ENCODE measurements at regions of chr3 and their contacts with region 1.

Region 1: GRCh38 chr3:163056874-163057497 is 1560.4 kb downstream of the OTOL1 start:
- DNase-seq: peak; percentile 42
- ATAC-seq: peak; percentile 63; the same call in 1 of the 2 replicates
- H3K4me3 ChIP-seq: no peak overlapping the region
- H3K27ac ChIP-seq: no peak overlapping the region
- H3K4me1 ChIP-seq: no peaks in the 10 kb centered on the region
- H3K27me3 ChIP-seq: no peaks in the 10 kb centered on the region
- CTCF ChIP-seq: peak; percentile 49 to 76 (median 59); a peak in 5 of 6 replicates
- POLR2A ChIP-seq: no peak
- RAD21 ChIP-seq: peak; percentile 66

Region 2: GRCh38 chr3:161177996-161178395 is 1879.0 kb before region 1 on chr3:
- CTCF ChIA-PET with region 1: no interaction called
- POLR2A ChIA-PET with region 1: no interaction called
- RAD21 ChIA-PET with region 1: no interaction called
- intact Hi-C with region 1: no loop called
- DNase-seq: no peak
- ATAC-seq: no peak
- H3K4me3 ChIP-seq: no peak overlapping the region
- H3K27ac ChIP-seq: no peak overlapping the region
- H3K4me1 ChIP-seq: no peaks in the 10 kb centered on the region
- H3K27me3 ChIP-seq: no peaks in the 10 kb centered on the region
- CTCF ChIP-seq: no peak
- POLR2A ChIP-seq: no peak
- RAD21 ChIP-seq: no peak

Region 3: GRCh38 chr3:162865466-162865865 is 191.5 kb before region 1 on chr3:
- CTCF ChIA-PET with region 1: no interaction called
- POLR2A ChIA-PET with region 1: no interaction called
- RAD21 ChIA-PET with region 1: no interaction called
- intact Hi-C with region 1: no loop called
- DNase-seq: no peak
- ATAC-seq: peak; percentile 55; the same call in 1 of the 2 replicates
- H3K4me3 ChIP-seq: no peak overlapping the region
- H3K27ac ChIP-seq: no peak overlapping the region
- H3K4me1 ChIP-seq: no peaks in the 10 kb centered on the region
- H3K27me3 ChIP-seq: no peaks in the 10 kb centered on the region
- CTCF ChIP-seq: peak in 1 of 3 experiments; percentile 17; a peak in 1 of 6 replicates
- POLR2A ChIP-seq: no peak
- RAD21 ChIP-seq: no peak

Region 4: GRCh38 chr3:162884373-162884772 is 172.6 kb before region 1 on chr3:
- CTCF ChIA-PET with region 1: no interaction called
- POLR2A ChIA-PET with region 1: no interaction called
- RAD21 ChIA-PET with region 1: no interaction called
- intact Hi-C with region 1: no loop called
- DNase-seq: no peak
- ATAC-seq: no peak
- H3K4me3 ChIP-seq: no peak overlapping the region
- H3K27ac ChIP-seq: no peak overlapping the region
- H3K4me1 ChIP-seq: no peaks in the 10 kb centered on the region
- H3K27me3 ChIP-seq: no peaks in the 10 kb centered on the region
- CTCF ChIP-seq: no peak
- POLR2A ChIP-seq: no peak
- RAD21 ChIP-seq: no peak

Region 5: DNA sequence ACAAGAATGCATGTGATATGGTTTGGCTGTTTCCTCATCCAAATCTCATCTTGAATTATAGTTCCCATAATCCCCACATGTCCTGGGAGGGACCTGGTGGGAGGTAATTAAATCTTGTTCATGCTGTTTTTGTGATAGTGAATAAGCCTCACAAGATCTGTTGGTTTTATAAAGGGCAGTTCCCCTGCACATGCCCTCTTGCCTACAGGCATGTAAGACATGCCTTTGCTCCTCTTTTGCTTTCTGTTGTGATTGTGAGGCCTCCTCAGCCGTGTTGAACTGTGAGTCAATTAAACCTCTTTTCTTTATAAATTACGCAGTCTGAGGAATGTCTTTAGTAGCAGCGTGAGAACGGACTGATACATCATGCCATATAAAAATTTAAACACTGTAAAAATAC is 23.3 kb before region 1 on chr3:
- CTCF ChIA-PET with region 1: no interaction called
- POLR2A ChIA-PET with region 1: no interaction called
- RAD21 ChIA-PET with region 1: no interaction called
- intact Hi-C with region 1: no loop called
- DNase-seq: no peak
- ATAC-seq: no peak
- H3K4me3 ChIP-seq: no peak overlapping the region
- H3K27ac ChIP-seq: no peak overlapping the region
- H3K4me1 ChIP-seq: no peaks in the 10 kb centered on the region
- H3K27me3 ChIP-seq: no peaks in the 10 kb centered on the region
- CTCF ChIP-seq: no peak
- POLR2A ChIP-seq: no peak
- RAD21 ChIP-seq: no peak

Region 6: DNA sequence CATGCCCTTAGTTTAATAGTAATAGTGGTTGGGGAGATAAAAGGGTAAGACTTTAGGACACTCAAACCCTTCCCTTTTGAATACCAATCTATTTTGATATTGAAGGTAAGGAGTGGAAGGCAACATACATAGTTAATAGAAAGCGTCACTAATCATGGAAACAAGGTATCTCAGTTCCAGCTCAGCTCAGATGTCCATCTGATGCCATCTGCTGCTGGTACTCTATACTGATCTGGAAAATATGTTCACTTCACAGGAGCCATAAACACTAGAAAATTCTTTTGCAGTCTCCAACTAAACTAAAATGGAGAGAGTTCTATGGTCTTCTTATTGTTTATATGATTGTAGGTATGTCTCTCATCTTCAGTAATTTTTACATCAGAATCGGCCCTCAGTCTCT is 216.7 kb after region 1 on chr3:
- CTCF ChIA-PET with region 1: no interaction called
- POLR2A ChIA-PET with region 1: no interaction called
- RAD21 ChIA-PET with region 1: no interaction called
- intact Hi-C with region 1: loop called (anchors 5 kb)
- DNase-seq: no peak
- ATAC-seq: peak; percentile 36; the same call in 1 of the 2 replicates
- H3K4me3 ChIP-seq: no peak overlapping the region
- H3K27ac ChIP-seq: no peak overlapping the region
- H3K4me1 ChIP-seq: no peaks in the 10 kb centered on the region
- H3K27me3 ChIP-seq: no peaks in the 10 kb centered on the region
- CTCF ChIP-seq: no peak
- POLR2A ChIP-seq: no peak
- RAD21 ChIP-seq: peak; percentile 20; the same call in 1 of the 2 replicates

Region 7: GRCh38 chr3:163490119-163490518 is 433.1 kb after region 1 on chr3:
- CTCF ChIA-PET with region 1: interaction called, 5 read pairs
- POLR2A ChIA-PET with region 1: no interaction called
- RAD21 ChIA-PET with region 1: no interaction called
- intact Hi-C with region 1: loop called (anchors 1 kb)
- DNase-seq: peak; percentile 48
- ATAC-seq: peak; percentile 95
- H3K4me3 ChIP-seq: no peak overlapping the region
- H3K27ac ChIP-seq: no peak overlapping the region
- H3K4me1 ChIP-seq: no peaks in the 10 kb centered on the region
- H3K27me3 ChIP-seq: no peaks in the 10 kb centered on the region
- CTCF ChIP-seq: peak; percentile 74 to 81 (median 77)
- POLR2A ChIP-seq: no peak
- RAD21 ChIP-seq: peak; percentile 80

Region 8: DNA sequence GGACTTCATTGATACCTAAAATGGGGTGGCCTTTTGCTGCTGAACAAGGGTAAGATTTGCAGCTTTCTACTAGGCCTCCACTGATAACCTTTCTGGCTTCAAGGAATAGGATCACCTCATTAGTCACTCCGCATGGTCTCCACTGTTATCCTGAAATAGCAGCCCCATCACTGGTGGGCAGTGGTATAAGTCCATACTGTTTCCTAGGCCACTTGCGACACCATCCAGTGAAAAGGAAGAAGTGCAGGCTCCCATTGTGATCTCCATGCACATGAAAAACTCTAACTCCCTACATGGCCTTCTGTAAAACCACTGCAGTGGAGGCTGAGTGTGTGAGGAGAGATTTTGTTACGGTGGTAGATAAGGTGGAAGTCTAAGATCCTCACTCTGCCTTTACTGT is 565.4 kb after region 1 on chr3:
- CTCF ChIA-PET with region 1: no interaction called
- POLR2A ChIA-PET with region 1: no interaction called
- RAD21 ChIA-PET with region 1: no interaction called
- intact Hi-C with region 1: loop called (anchors 10 kb)
- DNase-seq: peak; percentile 0
- ATAC-seq: peak; percentile 55; the same call in 1 of the 2 replicates
- H3K4me3 ChIP-seq: no peak overlapping the region
- H3K27ac ChIP-seq: no peak overlapping the region
- H3K4me1 ChIP-seq: no peaks in the 10 kb centered on the region
- H3K27me3 ChIP-seq: no peaks in the 10 kb centered on the region
- CTCF ChIP-seq: peak; percentile 6 to 22 (median 22); a peak in 3 of 6 replicates
- POLR2A ChIP-seq: no peak
- RAD21 ChIP-seq: peak; percentile 34; the same call in 1 of the 2 replicates

Region 9: DNA sequence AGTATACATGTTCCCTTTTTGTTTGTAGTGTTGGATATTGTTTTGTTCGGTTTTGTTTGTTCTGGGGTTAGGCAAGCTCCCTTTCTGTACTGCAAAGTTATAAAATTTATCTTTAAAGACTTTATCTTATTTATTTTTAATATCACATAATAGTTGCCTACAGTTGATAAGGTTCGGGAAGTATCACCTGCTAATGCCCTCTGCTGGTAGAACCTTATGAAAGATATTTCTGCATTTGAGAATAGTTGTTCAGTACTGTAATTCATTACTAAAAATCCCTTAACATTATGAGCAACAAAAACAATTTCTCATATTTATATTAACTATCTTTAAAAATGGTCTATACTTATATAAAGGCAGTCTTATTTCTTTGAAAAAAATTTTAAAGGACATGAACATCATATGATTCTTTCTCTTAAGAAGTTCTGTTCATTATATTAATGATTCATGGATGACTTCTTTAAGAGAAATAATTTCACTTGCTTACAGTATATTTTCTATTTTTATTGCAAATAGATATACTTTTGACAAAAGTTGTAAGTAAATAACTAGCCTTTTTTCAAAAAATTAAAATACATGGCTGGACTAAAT is 894.5 kb after region 1 on chr3:
- CTCF ChIA-PET with region 1: no interaction called
- POLR2A ChIA-PET with region 1: no interaction called
- RAD21 ChIA-PET with region 1: no interaction called
- intact Hi-C with region 1: loop called (anchors 5 kb)
- DNase-seq: no peak
- ATAC-seq: peak; percentile 57; the same call in 1 of the 2 replicates
- H3K4me3 ChIP-seq: no peak overlapping the region
- H3K27ac ChIP-seq: no peak overlapping the region
- H3K4me1 ChIP-seq: no peaks in the 10 kb centered on the region
- H3K27me3 ChIP-seq: no peaks in the 10 kb centered on the region
- CTCF ChIP-seq: peak in 2 of 3 experiments; percentile 53 to 55; a peak in 4 of 6 replicates
- POLR2A ChIP-seq: no peak
- RAD21 ChIP-seq: peak; percentile 49